Colonic mucosa (tissue), 4 donors: ENCODE measurements at regions of chr1 and their contacts with region 1.

Region 1: DNA sequence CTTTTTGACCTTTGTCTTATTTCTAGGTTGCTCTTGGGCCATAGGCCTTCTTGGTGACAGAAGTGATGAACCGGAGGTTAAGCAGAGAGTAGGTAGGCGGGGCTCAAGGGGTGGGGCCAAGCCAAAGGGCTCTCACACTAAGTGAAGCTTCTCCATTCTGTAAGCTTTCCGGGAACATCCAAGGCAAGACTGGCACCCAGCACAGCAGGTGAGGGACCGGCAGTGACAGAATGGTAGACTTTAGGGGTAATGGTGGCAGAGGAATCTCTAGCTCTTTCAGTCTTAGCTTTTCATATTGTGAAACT is at the start of gene TNFAIP8L2:
- DNase-seq: peak; percentile 73
- H3K4me3 ChIP-seq: peak within 1 kb of the TSS; percentile 19
- H3K27ac ChIP-seq: peak within 1 kb of the TSS; percentile 51
- H3K4me1 ChIP-seq: no peaks in the 10 kb centered on the region
- H3K27me3 ChIP-seq: no peaks in the 10 kb centered on the region
- CTCF ChIP-seq: no peak
- total RNA-seq, gene TNFAIP8L2: 0.72 to 1.2 TPM

Region 2: DNA sequence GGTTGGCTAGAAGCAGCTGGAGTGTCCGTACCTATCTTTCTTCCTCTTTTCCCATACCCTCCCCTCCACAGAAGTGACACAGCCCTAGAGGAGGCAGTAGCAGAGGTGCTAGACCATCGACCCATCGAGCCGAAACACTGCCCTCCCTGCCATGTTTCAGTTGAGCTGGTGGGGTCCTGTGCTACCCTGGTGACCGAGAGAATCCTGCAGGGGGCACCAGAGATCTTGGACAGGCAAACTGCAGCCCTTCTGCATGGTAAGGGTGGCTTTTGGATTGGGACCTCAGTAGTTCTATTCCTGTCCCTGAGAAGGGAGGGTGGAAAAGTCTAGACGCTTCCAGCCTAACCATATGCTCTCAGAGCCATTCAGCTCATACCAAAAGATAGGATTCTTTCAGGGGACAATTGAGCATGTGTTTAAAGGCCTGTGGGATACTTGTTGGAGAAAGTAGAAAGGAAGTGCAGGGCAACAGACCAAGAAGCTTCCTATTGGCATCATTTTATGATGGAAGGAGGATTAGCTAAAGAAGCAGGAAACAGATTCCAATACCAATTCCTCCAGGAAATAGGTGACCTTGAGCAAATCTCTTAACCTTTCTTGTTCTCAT is 131.8 kb before region 1 on chr1:
- intact Hi-C with region 1: loop called (anchors 10 kb)
- DNase-seq: peak; percentile 83
- H3K4me3 ChIP-seq: no peak overlapping the region
- H3K27ac ChIP-seq: no peak overlapping the region
- H3K4me1 ChIP-seq: no peaks in the 10 kb centered on the region
- H3K27me3 ChIP-seq: no peaks in the 10 kb centered on the region
- CTCF ChIP-seq: peak; percentile 48

Region 3: DNA sequence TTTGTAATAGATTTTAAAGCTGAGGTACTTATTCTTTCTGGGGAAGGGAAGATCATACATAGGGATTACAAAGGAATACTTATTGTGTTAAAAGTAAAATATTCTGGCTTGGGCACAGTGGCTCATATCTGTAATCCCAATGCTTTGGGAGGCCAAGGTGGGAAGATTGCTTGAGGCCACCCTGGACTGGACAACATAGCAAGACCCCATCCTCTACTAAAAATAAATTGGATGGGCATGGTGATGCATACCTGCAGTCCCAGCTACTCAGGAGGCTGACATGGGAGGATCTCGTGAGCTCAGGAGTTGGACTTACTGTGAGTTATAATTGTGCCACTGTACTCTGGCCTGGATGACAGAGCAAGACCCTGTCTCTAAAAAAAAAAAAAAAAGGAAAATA is 58.3 kb before region 1 on chr1:
- intact Hi-C with region 1: loop called (anchors 5 kb)
- DNase-seq: no peak
- H3K4me3 ChIP-seq: no peak overlapping the region
- H3K27ac ChIP-seq: no peak overlapping the region
- H3K4me1 ChIP-seq: no peaks in the 10 kb centered on the region
- H3K27me3 ChIP-seq: no peaks in the 10 kb centered on the region
- CTCF ChIP-seq: no peak